Activated T-helper 2 cell treated with anti-CD3 and anti-CD28 coated beads, Interferon-gamma antibody, Interleukin-2, Interleukin-4, amounts not matched to agents 10 μg/mL and 5 μg/mL and 100 μg/mL, durations not matched to agents 14 hours and 24 hours and 36 hours (primary cell): ENCODE measurements at regions of chrX and their contacts with region 1.

Region 1: GRCh38 chrX:131830400-131831184 is 192.5 kb upstream of the STK26 start:
- DNase-seq: peak; percentile 62
- H3K4me3 Mint-ChIP-seq: peak overlapping the region; percentile 94
- H3K27ac Mint-ChIP-seq: peak overlapping the region; percentile 94
- H3K4me1 Mint-ChIP-seq: peaks cover 37% of the 10 kb centered on the region
- H3K27me3 Mint-ChIP-seq: no peaks in the 10 kb centered on the region

Region 2: DNA sequence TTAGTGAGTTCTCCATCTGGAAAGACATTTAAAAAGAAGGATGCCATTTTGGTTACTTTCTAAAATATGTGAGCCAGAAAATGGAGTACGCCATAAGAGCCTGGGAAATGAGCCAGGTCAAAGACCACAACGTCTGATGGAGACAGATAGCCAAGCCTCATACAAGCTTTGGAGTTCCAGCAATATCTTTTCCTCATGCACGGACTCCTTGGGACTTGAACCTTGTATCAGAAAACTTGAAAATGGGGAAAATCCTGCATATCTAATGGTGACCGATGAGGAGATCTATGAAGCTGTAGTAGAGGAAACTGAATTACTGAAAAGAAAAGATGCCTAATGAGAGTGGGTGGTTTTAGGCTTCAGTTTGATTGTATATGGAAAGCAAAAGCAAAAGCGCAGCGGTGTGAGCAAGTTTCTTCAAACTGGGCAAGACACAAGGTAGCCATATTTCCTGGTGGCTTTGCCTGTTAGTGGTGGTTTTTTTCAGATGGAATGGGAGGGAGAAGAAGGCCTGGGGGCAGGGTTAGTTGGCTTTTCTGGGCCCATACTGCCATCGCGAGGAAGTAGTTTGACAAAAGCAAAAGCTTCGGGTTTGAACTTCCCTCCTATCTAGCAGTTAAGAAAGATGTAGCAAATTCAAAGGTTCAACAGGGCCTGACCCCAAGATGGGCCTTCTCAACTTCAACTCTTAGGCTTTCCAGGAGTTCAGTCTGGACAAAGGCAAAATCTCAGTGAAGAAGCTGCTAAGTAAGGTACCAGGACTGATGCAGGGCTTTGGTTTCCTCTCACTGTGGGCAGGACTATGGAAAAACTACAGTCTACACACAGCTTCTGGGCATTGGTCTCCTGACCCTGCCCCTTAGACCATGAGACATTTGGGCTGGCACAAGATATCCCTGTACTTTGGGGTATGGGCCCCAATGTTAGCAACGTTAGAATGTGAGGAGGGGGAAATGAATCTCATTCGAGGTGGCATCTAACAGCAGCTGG is 17.5 kb before region 1 on chrX:
- intact Hi-C with region 1: loop called (anchors 2 kb)
- DNase-seq: peak; percentile 66
- H3K4me3 Mint-ChIP-seq: peak overlapping the region; percentile 67
- H3K27ac Mint-ChIP-seq: peak overlapping the region; percentile 89
- H3K4me1 Mint-ChIP-seq: peaks cover 24% of the 10 kb centered on the region
- H3K27me3 Mint-ChIP-seq: no peaks in the 10 kb centered on the region

Region 3: DNA sequence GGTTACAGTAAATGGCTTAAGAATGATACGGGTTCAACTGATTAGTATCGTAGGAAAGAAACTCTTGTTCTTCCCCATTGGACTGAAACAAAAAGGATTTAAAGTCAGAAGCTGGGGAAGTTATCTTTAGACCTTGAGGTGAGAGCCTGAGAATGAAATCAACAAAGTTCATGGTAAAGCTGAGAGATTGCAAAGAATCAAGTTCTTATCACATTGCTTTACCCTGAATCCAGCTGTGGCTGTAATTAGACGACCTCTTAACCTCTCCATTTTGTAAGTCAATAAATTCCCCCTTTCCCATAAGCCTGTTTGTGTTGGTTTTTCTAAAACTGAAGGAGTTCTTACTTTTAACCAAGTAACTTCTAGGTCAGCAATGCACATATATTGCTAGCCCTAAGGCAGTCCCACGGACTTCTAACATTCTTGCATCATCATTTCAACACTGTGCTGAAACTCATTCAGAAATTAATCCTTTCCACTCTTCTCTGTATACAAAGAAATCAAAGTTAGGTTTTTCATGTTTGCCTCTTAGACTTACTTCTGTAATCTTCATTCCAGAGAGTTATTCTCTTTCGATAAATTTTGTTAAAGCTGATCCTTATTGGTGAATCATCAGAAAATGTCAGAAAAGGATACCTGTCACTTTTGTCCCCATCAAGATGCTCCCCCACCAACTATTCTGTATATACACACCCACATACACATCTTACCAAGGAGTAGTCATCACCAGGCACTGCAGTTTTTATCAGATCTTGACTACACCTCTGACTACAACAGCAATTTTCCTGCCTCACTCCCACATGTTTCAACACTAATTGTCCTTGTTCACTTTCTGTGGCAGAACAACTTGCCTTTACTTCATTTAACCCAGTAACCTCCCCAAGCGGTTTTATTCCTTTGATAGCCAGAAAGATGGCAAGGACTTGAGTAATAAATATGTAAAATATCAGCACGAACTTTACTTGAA is 114.6 kb after region 1 on chrX:
- intact Hi-C with region 1: loop called (anchors 10 kb)
- DNase-seq: no peak
- H3K4me3 Mint-ChIP-seq: peak overlapping the region; percentile 22
- H3K27ac Mint-ChIP-seq: peak overlapping the region; percentile 79
- H3K4me1 Mint-ChIP-seq: peaks cover 30% of the 10 kb centered on the region
- H3K27me3 Mint-ChIP-seq: no peaks in the 10 kb centered on the region

Region 4: GRCh38 chrX:132022967-132023895 is 192.6 kb after region 1 on chrX and contains the start of gene STK26:
- intact Hi-C with region 1: loop called (anchors 2 kb)
- DNase-seq: peak; percentile 77
- H3K4me3 Mint-ChIP-seq: peak within 1 kb of the TSS; percentile 91
- H3K27ac Mint-ChIP-seq: peak within 1 kb of the TSS; percentile 94
- H3K4me1 Mint-ChIP-seq: peaks cover 22% of the 10 kb centered on the region
- H3K27me3 Mint-ChIP-seq: no peaks in the 10 kb centered on the region
- total RNA-seq, gene STK26: 108 and 115 TPM in 2 replicates

Region 5: DNA sequence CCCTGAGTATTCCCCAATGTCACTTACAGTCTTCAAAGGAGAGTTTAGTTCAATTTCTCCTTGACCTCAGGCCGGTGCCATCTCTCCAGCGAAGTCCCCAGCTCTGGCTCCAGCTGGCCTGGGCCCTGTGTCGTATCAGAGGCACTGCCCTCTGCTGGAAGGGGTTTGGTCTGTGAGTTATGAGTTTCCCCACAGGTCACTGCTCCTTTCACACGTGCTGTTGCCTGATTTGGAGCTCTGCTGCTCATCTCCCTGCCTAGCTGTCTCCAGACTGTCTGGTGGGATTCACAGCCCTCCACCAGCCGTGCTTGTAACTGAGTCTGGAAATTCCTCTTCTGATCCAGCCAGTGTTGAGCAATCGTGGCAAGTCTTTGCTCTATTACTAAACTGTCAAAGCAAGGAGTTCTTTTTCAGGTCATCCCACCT is 388.8 kb after region 1 on chrX and contains the start of gene RAP2C:
- intact Hi-C with region 1: loop called (anchors 2 kb)
- DNase-seq: peak; percentile 47
- H3K4me3 Mint-ChIP-seq: peak within 1 kb of the TSS; percentile 91
- H3K27ac Mint-ChIP-seq: peak within 1 kb of the TSS; percentile 92
- H3K4me1 Mint-ChIP-seq: peaks cover 19% of the 10 kb centered on the region
- H3K27me3 Mint-ChIP-seq: no peaks in the 10 kb centered on the region
- total RNA-seq, gene RAP2C: 40.1 and 42.1 TPM in 2 replicates

Region 6: DNA sequence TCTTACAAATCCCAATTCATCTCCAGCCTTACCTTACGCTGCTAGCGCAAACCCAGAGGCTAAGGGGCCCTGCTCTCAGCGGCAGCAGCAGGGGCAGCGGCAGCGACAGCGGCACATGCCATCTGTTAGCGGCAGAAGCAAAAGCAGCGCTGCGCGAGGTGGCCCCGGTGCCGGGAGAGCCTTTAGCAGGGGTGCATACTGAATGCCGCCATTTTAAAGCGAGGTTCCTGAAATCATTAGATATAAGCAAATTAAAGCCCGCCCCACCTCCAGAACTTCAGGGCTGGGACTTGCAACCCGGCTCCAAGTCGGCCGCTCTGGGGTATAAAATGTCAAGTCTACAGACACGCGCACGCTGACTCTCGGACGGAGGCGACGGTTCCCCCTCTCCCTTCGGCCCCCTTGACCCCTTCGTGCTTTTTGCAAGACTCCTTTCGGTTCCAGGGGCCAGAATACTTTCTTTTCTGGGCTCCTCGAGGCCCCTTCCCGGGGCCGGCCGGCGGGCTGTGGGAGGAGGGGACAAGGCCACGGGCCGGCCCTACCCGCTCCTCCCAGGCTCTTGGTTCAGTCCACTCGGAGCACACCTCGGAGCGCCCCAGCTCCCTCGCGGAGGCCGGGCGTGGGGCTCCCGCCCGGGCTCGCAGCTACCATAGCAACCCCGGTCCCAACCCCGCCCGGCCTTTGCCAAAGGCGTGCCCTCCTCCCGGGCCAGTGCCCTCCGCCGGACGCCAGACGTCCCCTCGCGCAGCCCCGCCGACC is 658.4 kb after region 1 on chrX and contains the start of gene MBNL3:
- intact Hi-C with region 1: loop called (anchors 5 kb)
- DNase-seq: peak; percentile 45
- H3K4me3 Mint-ChIP-seq: peak within 1 kb of the TSS; percentile 94
- H3K27ac Mint-ChIP-seq: peak within 1 kb of the TSS; percentile 95
- H3K4me1 Mint-ChIP-seq: peaks cover 22% of the 10 kb centered on the region
- H3K27me3 Mint-ChIP-seq: no peaks in the 10 kb centered on the region
- total RNA-seq, gene MBNL3: 15.7 and 16.2 TPM in 2 replicates

Region 7: DNA sequence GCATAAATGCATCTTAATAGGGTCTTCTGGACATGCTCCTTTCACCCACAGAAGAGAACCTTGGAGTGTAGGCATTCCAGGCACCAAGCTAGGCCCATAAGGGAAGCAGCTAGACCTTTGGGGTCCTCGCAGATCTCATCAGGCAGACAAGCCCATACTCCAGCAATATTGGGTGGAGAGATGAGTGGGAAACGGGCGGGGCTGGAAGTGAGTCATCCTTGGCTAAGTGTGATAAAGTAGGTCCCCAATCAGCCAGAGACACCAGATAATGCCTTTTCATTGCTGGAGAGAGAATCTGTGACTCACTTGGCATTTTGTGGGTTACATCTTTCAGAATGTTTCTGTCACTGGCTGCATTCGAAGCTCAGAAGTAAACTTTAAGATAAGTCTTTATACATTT is 791.5 kb after region 1 on chrX:
- intact Hi-C with region 1: loop called (anchors 5 kb)
- DNase-seq: peak; percentile 9
- H3K4me3 Mint-ChIP-seq: no peak overlapping the region
- H3K27ac Mint-ChIP-seq: peak overlapping the region; percentile 82
- H3K4me1 Mint-ChIP-seq: peaks cover 12% of the 10 kb centered on the region
- H3K27me3 Mint-ChIP-seq: no peaks in the 10 kb centered on the region